SK-N-SH (cell line): ENCODE measurements at regions of chr1 and their contacts with region 1.

Region 1: DNA sequence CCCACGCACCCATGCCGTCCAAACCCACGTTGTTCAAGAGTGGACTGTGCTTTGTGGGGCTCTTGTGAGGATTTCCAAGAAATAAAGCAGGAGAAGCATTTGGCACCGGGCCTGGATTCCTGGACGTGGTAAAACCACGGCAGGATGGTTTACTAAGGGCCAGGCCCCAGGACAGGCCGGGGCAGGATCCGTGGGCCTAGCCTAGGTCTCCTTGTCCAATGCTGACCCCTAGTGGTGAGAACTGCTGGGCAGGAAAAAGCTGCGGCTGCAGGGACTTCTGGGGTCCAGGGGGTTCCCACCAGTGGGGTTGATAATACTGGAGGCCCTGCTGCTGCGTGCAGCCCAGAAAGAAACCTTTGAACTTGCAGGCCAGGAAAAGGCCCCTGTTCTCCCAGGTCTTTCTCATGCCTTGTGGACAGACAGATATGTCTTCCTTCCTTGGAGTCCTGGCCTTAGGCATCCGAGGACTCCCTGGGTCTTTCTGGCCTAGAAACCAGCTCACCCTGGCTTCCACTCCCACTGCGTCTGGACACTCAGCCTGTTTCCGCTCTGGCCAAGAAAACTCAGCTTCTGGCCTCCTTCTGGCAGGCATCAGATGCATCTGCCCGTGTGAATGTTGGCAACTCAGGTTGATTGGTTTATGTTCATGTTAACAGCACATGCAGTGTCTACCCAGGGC is 106.9 kb upstream of the TMEM51 start:
- DNase-seq: peak; percentile 94
- H3K4me3 ChIP-seq: no peak overlapping the region; a peak in 1 of 4 replicates
- H3K27ac ChIP-seq: peak overlapping the region; percentile 29 to 31; a peak in 3 of 4 replicates
- H3K4me1 ChIP-seq: peaks cover 0 to 3% of the 10 kb centered on the region in 2 experiments; a peak in 1 of 4 replicates
- H3K27me3 ChIP-seq: no peaks in the 10 kb centered on the region
- CTCF ChIP-seq: peak; percentile 98
- EP300 ChIP-seq: no peak
- RAD21 ChIP-seq: peak; percentile 94

Region 2: DNA sequence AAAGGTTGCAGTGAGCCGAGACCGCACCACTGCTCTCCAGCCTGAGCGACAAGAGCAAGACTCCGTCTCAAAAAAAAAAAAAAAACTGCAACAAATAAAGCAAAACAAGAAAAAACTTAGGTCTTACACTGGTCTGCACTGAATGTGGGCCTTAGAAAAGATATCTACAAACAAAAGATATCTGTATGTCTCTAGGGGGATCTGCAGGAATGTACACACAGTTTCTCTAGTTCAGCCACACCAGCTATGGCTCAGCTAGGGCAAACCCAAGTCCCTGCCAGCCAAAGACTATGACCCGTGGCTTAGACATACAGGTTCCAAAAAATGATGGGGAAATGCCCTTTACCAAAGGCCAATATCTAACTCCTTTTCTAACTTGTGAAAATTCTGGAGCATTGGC is 650.5 kb before region 1 on chr1:
- CTCF ChIA-PET with region 1: interaction called, 12 read pairs
- POLR2A ChIA-PET with region 1: no interaction called
- DNase-seq: no peak
- H3K4me3 ChIP-seq: no peak overlapping the region
- H3K27ac ChIP-seq: no peak overlapping the region
- H3K4me1 ChIP-seq: no peaks in the 10 kb centered on the region
- H3K27me3 ChIP-seq: no peaks in the 10 kb centered on the region
- CTCF ChIP-seq: no peak
- EP300 ChIP-seq: no peak
- RAD21 ChIP-seq: no peak

Region 3: DNA sequence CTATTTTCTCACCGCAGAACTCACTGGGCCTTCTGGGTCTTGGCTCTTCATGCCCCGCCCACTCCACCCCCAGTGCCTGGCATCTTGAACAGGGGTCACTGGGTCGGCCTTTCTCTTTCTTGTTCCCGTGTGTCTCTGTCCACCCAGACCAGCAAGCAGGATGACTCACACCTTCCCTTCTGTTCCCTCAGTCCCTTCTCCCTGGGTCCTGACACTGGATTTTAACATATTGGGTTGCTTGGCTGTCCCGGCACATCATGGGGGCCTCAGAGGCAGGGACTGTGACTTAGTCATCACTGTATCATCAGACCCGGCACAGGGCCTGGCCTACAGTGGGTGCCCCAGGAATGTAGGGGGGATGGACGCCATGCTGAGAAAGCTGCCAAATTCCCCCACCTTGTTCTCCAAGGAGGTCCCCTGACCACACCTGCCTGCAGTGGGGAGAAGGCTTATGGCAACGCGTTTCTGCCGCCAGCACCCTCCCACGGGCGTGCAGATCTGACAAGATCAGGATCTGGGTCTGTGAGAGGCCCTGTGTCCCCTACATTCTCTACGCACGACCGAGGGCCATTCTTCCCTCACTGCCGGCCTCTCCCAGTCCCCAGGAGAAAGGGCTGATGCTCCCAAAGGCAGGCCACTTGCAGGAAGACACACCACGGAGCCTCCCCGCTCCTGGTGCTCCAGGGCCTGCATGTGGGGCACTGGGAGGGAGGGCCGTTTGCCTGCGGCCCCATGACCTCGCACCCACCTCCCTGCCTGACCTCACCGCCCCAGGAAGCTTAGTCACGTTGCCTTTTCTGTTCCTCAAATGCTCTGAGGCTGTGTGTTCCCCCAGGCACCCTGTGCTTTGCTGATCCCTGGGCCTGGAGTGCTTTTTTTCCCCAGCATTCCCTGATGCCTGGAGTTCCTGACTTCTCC is 50.2 kb before region 1 on chr1:
- CTCF ChIA-PET with region 1: no interaction called
- POLR2A ChIA-PET with region 1: no interaction called
- DNase-seq: peak; percentile 37
- H3K4me3 ChIP-seq: no peak overlapping the region
- H3K27ac ChIP-seq: peak overlapping the region in 1 of 2 experiments; percentile 73; a peak in 2 of 4 replicates
- H3K4me1 ChIP-seq: peaks cover 10 to 22% of the 10 kb centered on the region in 2 experiments; a peak in 2 of 4 replicates
- H3K27me3 ChIP-seq: no peaks in the 10 kb centered on the region
- CTCF ChIP-seq: no peak
- EP300 ChIP-seq: peak in 1 of 2 experiments; percentile 56; a peak in 1 of 4 replicates
- RAD21 ChIP-seq: no peak

Region 4: GRCh38 chr1:15033264-15033663 is 13.4 kb before region 1 on chr1:
- CTCF ChIA-PET with region 1: interaction called, 33 read pairs
- POLR2A ChIA-PET with region 1: no interaction called
- DNase-seq: no peak
- H3K4me3 ChIP-seq: no peak overlapping the region
- H3K27ac ChIP-seq: no peak overlapping the region
- H3K4me1 ChIP-seq: no peaks in the 10 kb centered on the region
- H3K27me3 ChIP-seq: no peaks in the 10 kb centered on the region
- CTCF ChIP-seq: peak; percentile 49
- EP300 ChIP-seq: no peak
- RAD21 ChIP-seq: no peak

Region 5: GRCh38 chr1:15075817-15076216 is 29.2 kb after region 1 on chr1:
- CTCF ChIA-PET with region 1: interaction called, 13 read pairs
- POLR2A ChIA-PET with region 1: no interaction called
- DNase-seq: no peak
- H3K4me3 ChIP-seq: no peak overlapping the region
- H3K27ac ChIP-seq: no peak overlapping the region
- H3K4me1 ChIP-seq: no peaks in the 10 kb centered on the region; a peak in 1 of 4 replicates
- H3K27me3 ChIP-seq: no peaks in the 10 kb centered on the region
- CTCF ChIP-seq: no peak
- EP300 ChIP-seq: no peak
- RAD21 ChIP-seq: no peak

Region 6: GRCh38 chr1:15152318-15153183 is 105.9 kb after region 1 on chr1:
- CTCF ChIA-PET with region 1: no interaction called
- POLR2A ChIA-PET with region 1: no interaction called
- DNase-seq: peak; percentile 79
- H3K4me3 ChIP-seq: peak overlapping the region; percentile 77 to 84
- H3K27ac ChIP-seq: peak overlapping the region; percentile 62 to 100
- H3K4me1 ChIP-seq: peaks cover 4 to 70% of the 10 kb centered on the region in 2 experiments; a peak in 3 of 4 replicates
- H3K27me3 ChIP-seq: no peaks in the 10 kb centered on the region
- CTCF ChIP-seq: peak; percentile 76
- EP300 ChIP-seq: peak in 1 of 2 experiments; percentile 29; a peak in 1 of 4 replicates
- RAD21 ChIP-seq: peak; percentile 76